PC-9 (cell line): ENCODE measurements at regions of chr20 and their contacts with region 1.

Region 1: DNA sequence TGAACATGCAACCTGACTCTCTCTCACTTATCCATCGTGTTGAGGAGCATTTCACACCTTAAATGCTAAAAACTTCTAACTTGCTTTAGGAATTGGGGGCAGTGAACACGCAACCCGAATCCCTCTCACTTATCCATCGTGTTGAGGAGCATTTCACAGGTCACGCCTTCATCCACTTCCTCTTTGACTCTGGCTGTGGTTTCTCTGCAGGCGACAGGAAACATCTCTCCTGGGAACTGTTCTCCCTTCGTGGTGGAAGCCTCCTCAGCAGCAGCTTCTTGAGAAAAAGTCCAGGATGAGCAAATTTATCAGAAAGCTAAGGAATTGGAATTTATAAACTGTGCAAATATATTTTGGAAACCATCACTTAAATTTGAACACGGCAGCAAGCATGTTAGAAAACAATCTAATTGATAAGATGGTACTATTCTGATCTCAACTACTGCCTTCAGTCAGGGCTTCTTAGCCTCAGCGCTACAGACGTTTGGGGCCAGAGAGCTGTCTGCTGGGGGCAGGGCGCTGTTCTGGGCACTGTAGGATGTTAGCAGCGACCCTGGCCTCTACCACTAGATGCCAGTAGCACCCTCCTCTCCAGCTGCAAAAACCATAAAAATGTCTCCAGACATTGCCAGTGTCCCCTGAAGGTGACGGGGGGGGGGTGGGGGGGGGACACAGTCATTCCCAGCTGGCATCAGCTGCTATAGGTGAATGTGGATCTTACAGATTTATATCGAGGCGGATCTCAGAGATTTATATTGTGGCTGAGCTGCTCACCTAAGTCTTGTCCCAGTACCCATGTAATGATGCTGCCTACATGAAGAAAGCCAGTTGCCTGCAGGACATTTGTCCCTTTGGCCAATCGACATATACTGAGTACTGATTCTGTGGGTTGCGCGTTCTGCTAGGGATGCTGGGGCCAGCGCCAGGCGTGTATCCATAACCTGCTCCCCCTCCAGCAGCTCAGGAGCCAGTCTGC is 26.2 kb downstream of the CTCFL start:
- DNase-seq: peak in 1 of 2 experiments; percentile 27
- H3K4me3 ChIP-seq: no peak overlapping the region
- H3K27ac ChIP-seq: no peak overlapping the region
- H3K4me1 ChIP-seq: peaks cover 12% of the 10 kb centered on the region
- H3K27me3 ChIP-seq: no peaks in the 10 kb centered on the region
- CTCF ChIP-seq: peak; percentile 61

Region 2: GRCh38 chr20:57071283-57071770 is 427.4 kb before region 1 on chr20:
- CTCF ChIA-PET with region 1: no interaction called
- POLR2A ChIA-PET with region 1: no interaction called
- intact Hi-C with region 1: no loop called
- DNase-seq: peak in 1 of 2 experiments; percentile 79
- H3K4me3 ChIP-seq: peak overlapping the region; percentile 34; the same call in 1 of the 2 replicates
- H3K27ac ChIP-seq: no peak overlapping the region
- H3K4me1 ChIP-seq: peaks cover 27% of the 10 kb centered on the region
- H3K27me3 ChIP-seq: no peaks in the 10 kb centered on the region
- CTCF ChIP-seq: no peak

Region 3: GRCh38 chr20:57560554-57561355 is 62.0 kb after region 1 on chr20 and contains the start of gene PCK1:
- CTCF ChIA-PET with region 1: no interaction called
- POLR2A ChIA-PET with region 1: no interaction called
- intact Hi-C with region 1: no loop called
- DNase-seq: no peak
- H3K4me3 ChIP-seq: no peak within 1 kb of the TSS
- H3K27ac ChIP-seq: no peak within 1 kb of the TSS
- H3K4me1 ChIP-seq: no peaks in the 10 kb centered on the region
- H3K27me3 ChIP-seq: peaks cover 100% of the 10 kb centered on the region
- CTCF ChIP-seq: no peak
- total RNA-seq, gene PCK1: not detected in 2 replicates

Region 4: DNA sequence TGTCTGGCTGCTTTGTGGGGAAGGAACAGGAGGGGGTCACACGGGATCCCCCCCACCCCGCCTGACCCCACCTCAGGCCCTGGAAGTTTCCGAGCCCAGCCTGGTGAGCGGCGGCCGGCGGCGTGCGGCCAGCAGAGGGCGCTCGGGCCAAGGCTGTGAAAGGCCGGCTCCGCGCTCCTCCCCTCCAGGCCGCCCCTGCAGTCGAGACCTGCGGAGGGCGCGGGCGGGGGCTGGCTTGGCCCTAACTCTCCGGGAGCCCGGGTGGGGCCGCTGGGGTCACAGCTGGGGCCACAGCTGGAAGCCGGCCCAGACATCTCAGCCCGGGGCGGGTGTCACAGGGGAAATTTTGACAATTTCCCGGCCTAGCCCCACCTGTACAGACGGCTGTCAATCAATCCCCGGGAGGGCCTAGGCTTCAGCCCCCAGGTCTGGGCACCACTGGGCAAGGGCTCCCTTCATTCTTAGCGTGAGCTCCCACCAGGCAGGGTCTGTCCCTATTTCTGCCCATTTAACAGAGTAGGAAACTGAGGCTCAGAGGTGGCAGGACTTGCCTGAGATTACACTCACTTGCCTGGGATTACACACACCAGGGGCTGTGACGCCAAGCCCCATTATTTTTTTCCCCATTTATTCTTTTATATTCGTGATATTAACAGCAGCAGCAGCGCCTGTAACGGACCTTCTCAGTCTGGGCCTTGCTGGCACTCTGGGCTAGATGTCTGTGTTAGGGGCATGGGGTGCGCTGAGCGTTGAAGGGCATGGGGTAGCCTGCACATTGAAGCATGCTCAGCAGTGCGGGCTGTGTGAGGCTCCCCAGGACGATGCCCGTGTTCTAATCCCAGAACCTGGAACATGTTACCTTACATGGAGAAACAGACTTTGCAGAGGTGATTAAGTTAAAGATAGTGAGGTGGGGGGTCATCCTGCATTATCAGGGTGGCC is 98.6 kb after region 1 on chr20:
- CTCF ChIA-PET with region 1: no interaction called
- POLR2A ChIA-PET with region 1: no interaction called
- intact Hi-C with region 1: loop called (anchors 5 kb)
- DNase-seq: peak in 1 of 2 experiments; percentile 73
- H3K4me3 ChIP-seq: peak overlapping the region; percentile 43; the same call in 1 of the 2 replicates
- H3K27ac ChIP-seq: no peak overlapping the region
- H3K4me1 ChIP-seq: peaks cover 4% of the 10 kb centered on the region; the same call in 1 of the 2 replicates
- H3K27me3 ChIP-seq: peaks cover 6% of the 10 kb centered on the region; the same call in 1 of the 2 replicates
- CTCF ChIP-seq: peak; percentile 97